ENCODE measurements at regions of chr1 and their contacts with region 1.

Region 1: DNA sequence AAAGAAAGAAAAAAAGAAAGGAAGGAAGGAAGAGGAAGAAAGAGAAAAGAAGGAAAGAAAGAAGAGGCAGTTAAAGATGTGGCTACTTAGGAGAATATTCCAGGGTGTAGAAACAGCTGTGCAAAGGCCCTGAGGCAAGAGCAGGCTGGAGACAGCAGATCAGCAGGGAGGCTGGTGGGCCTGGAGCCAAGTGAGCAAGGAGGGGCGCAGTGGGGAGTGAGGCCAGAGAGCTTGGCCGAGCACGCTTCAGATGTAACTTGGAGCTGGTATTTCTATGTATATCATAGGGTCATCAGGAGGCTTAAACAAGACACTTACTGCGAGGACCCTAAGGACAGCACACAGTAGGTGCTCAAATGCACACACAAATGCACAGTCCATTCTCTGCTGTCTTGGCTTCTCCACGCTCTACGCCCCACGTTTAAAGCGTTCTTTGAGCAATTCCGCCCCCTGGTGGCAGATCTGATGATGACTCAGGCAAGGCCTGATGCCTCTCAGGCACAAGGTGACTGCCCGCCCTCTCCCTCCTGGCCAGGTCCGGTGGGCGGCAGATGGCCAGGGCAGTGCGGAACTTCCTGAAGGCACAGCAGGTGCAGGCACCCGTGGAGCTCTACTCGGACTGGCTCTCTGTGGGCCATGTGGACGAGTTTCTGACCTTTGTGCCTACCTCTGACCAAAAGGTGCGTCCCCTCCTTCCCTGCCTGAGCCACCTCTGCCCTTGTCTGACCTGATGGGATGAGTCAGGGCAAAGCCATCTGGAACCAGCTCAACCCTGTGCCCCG is 11.9 kb upstream of the PADI3 start:
- DNase-seq: peak; percentile 82
- H3K4me3 ChIP-seq: no peak overlapping the region
- H3K27ac ChIP-seq: no peak overlapping the region
- H3K4me1 ChIP-seq: no peaks in the 10 kb centered on the region
- H3K27me3 ChIP-seq: peaks cover 71% of the 10 kb centered on the region
- CTCF ChIP-seq: peak; percentile 86

Region 2: GRCh38 chr1:16958503-16958902 is 278.5 kb before region 1 on chr1:
- intact Hi-C with region 1: loop called (anchors 10 kb)
- DNase-seq: no peak
- H3K4me3 ChIP-seq: no peak overlapping the region
- H3K27ac ChIP-seq: no peak overlapping the region
- H3K4me1 ChIP-seq: peaks cover 15% of the 10 kb centered on the region
- H3K27me3 ChIP-seq: no peaks in the 10 kb centered on the region
- CTCF ChIP-seq: no peak

Region 3: DNA sequence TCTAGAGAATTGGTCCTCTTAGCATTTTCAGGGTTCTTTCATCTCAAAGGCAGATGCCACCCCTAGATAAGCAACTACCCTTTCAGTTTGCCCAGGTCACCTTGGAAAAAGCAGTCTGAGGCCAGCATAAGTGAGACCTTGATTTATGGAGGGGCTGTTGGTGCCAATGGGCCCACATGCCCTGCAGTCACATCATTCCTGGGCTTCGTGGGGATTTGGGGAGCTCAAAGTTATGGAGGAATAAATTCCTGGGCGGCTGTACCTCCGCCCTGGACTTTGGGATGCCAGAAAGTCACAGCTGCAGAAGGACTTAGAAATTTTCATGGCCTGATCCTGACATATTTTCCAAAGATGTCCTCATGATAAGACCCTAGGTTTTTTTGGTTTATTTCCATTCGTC is 180.4 kb before region 1 on chr1:
- intact Hi-C with region 1: loop called (anchors 2 kb)
- DNase-seq: no peak
- H3K4me3 ChIP-seq: no peak overlapping the region
- H3K27ac ChIP-seq: no peak overlapping the region
- H3K4me1 ChIP-seq: peaks cover 32% of the 10 kb centered on the region
- H3K27me3 ChIP-seq: peaks cover 14% of the 10 kb centered on the region
- CTCF ChIP-seq: no peak

Region 4: DNA sequence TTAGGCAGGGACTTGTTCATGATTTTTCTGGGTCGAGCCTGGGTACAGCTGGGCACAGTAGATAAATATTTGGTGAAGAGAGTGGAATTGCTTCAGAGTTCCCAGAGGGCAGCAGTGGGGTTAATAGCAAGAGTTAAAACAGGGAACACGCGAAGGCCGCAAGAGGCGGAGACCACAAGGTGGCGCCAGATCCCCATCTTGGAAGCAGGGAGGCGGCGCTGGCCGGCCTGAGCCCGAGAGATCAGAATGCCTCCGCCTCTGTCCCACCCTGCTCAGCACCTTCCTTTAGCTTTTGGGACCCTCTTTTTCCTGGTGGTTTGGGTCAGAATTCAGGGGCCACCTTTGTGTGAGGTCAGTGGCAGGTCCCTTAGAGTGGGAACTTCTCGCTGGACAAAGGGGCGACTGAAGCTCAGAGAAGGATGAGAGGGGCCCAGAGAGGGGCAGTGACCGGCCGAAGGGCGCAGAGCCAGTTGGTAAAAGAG is 111.2 kb before region 1 on chr1:
- intact Hi-C with region 1: loop called (anchors 5 kb)
- DNase-seq: peak; percentile 83
- H3K4me3 ChIP-seq: no peak overlapping the region
- H3K27ac ChIP-seq: no peak overlapping the region
- H3K4me1 ChIP-seq: peaks cover 4% of the 10 kb centered on the region
- H3K27me3 ChIP-seq: peaks cover 23% of the 10 kb centered on the region
- CTCF ChIP-seq: peak; percentile 98

Measured in left ventricle myocardium inferior (tissue), 1 donor.